HEK293 (cell line): ENCODE measurements at regions of chr10 and their contacts with region 1.

Region 1: GRCh38 chr10:100878291-100878910 is 34.4 kb upstream of the SLF2 start:
- H3K4me3 ChIP-seq: no peak overlapping the region
- H3K27ac ChIP-seq: no peak overlapping the region
- H3K4me1 ChIP-seq: no peaks in the 10 kb centered on the region
- CTCF ChIP-seq: peak; percentile 88

Region 2: GRCh38 chr10:100508691-100509150 is 369.7 kb before region 1 on chr10:
- CTCF ChIA-PET with region 1: interaction called, 22 read pairs
- POLR2A ChIA-PET with region 1: no interaction called
- H3K4me3 ChIP-seq: no peak overlapping the region
- H3K27ac ChIP-seq: no peak overlapping the region
- H3K4me1 ChIP-seq: no peaks in the 10 kb centered on the region
- CTCF ChIP-seq: peak; percentile 69

Region 3: GRCh38 chr10:100551196-100551595 is 327.2 kb before region 1 on chr10:
- CTCF ChIA-PET with region 1: interaction called, 11 read pairs
- POLR2A ChIA-PET with region 1: no interaction called
- H3K4me3 ChIP-seq: no peak overlapping the region
- H3K27ac ChIP-seq: no peak overlapping the region
- H3K4me1 ChIP-seq: no peaks in the 10 kb centered on the region
- CTCF ChIP-seq: no peak

Region 4: GRCh38 chr10:100569618-100570473 is 308.6 kb before region 1 on chr10:
- CTCF ChIA-PET with region 1: interaction called, 197 read pairs
- POLR2A ChIA-PET with region 1: no interaction called
- H3K4me3 ChIP-seq: peak overlapping the region; percentile 49
- H3K27ac ChIP-seq: no peak overlapping the region
- H3K4me1 ChIP-seq: no peaks in the 10 kb centered on the region
- CTCF ChIP-seq: 0 out of 2 replicates have a peak, but pooled peaks have one; percentile 37

Region 5: GRCh38 chr10:100775386-100775785 is 103.0 kb before region 1 on chr10:
- CTCF ChIA-PET with region 1: no interaction called
- POLR2A ChIA-PET with region 1: no interaction called
- H3K4me3 ChIP-seq: no peak overlapping the region
- H3K27ac ChIP-seq: no peak overlapping the region
- H3K4me1 ChIP-seq: no peaks in the 10 kb centered on the region
- CTCF ChIP-seq: no peak